ENCODE measurements at regions of chr9 and their contacts with region 1.

Region 1: DNA sequence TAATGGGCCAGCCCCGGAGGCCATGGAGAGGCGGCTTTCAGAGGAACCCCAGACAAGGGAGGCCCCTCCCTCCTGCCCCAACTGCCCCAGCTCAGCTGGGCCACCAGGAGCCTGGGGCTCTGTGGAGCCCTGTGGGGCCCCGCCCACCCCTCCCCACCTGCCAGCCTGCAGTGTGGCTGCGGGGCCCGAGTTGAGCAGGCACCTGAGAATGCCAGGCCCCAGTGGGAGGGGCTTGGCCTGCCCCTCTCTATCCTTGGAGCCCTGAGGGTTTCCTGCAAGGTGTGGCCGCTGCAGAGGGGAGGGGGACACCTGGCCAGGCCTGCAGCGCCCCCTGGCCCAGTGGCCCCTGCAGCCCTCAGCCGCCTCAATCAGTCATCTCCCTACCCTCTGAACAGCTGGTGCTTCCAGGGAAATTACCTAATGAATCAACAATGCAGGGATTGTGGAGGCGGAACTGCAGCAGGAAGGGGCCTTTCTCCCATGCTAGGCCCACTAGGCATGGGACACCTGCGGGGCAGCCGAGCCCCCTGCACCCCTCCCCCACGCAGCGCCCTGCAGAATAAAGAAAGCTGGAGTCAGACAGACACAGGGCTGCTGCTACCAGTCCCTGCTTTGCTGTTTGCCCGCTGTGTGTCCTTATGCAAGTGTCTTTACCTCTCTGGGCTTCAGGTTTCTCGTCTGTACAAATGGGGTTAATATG is 47.9 kb downstream of the LMX1B start:
- DNase-seq: no peak

Region 2: GRCh38 chr9:125440411-125440810 is 1221.3 kb before region 1 on chr9:
- intact Hi-C with region 1: loop called in 1 of 2 experiments (anchors 5 kb)
- DNase-seq: peak; percentile 80

Region 3: DNA sequence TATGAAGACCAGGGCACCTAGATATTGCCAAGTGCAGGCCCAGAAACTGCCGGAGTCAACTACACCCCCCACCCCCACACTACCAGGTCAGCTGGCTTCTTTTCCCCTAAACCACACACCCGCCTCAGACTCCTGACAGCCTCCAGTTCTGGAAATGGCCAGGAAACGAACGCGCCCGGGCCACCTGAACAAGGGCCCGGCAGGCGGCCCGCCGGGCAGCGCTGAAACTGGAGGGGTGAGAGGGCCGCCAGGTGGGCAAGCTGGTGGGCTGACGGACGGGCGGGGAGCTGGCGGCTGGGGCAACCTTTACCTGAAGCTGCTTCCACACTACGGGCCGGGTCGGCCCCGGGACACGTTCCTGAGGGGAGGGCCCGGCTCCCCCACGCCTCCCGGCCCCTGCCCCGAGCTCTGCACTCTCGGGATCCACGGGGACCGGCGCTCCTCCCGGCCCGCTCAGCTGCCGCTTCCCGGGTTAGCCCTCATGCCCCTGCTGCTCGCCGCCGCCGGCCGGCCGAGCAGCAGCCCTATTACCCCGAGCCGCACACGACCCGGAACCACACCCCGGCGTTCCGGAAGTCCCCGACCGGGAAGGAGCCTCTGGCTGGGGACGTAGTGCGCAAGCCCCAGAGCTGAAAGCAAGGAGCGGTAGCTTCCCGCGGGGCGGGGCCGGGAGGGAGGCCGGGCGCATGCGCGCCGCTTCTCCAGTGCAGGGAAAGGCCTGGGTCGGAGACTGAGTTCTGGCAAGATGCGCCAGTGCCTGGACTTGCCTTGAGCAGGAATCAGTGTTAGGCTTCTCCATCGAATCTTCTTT is 954.8 kb before region 1 on chr9 and contains the start of gene MAPKAP1:
- intact Hi-C with region 1: loop called in 1 of 2 experiments (anchors 5 kb)
- DNase-seq: peak; percentile 99
- total RNA-seq, gene MAPKAP1: 56.1 to 62.2 TPM

Region 4: GRCh38 chr9:126534431-126535186 is 127.1 kb before region 1 on chr9:
- intact Hi-C with region 1: no loop called
- DNase-seq: peak; percentile 64

Region 5: GRCh38 chr9:126650404-126651341 is 11.0 kb before region 1 on chr9:
- intact Hi-C with region 1: no loop called
- DNase-seq: no peak

Measured in posterior vena cava (tissue), 2 donors.